ENCODE measurements at regions of chr6 and their contacts with region 1.

Region 1: GRCh38 chr6:24520929-24521546 is 26.3 kb downstream of the ALDH5A1 start:
- DNase-seq: peak; percentile 25 to 70
- H3K4me3 ChIP-seq: no peak overlapping the region
- H3K27ac ChIP-seq: no peak overlapping the region
- H3K4me1 ChIP-seq: no peaks in the 10 kb centered on the region
- H3K27me3 ChIP-seq: no peaks in the 10 kb centered on the region
- CTCF ChIP-seq: peak; percentile 88 to 93 (median 89)
- EP300 ChIP-seq: no peak
- POLR2A ChIP-seq: no peak
- RAD21 ChIP-seq: peak; percentile 55 to 74

Region 2: DNA sequence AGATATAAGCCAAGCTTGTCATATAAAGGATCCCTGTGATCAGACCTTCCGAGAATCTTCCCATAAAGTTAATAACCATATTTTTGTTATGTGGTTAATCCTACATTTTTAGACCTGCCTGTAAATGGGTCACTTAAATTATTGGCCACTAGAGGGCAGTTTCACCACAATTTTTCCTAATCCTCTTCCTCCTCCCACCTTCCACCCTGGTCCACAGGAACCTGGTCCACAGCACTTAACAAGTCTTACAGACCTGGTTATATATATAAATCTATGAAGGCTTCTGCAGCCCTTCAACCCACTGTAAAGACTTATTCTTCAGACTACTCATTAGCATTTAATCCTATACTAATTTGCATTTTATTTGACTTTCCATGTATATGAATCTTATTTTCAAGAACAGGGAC is 90.0 kb before region 1 on chr6:
- CTCF ChIA-PET with region 1: interaction called, 23 read pairs
- POLR2A ChIA-PET with region 1: no interaction called
- DNase-seq: peak in 1 of 2 experiments; percentile 9
- H3K4me3 ChIP-seq: no peak overlapping the region
- H3K27ac ChIP-seq: no peak overlapping the region
- H3K4me1 ChIP-seq: no peaks in the 10 kb centered on the region
- H3K27me3 ChIP-seq: no peaks in the 10 kb centered on the region
- CTCF ChIP-seq: peak; percentile 3 to 67 (median 51)
- EP300 ChIP-seq: no peak
- POLR2A ChIP-seq: no peak
- RAD21 ChIP-seq: peak; percentile 69 to 72

Region 3: GRCh38 chr6:24537771-24538385 is 16.8 kb after region 1 on chr6:
- CTCF ChIA-PET with region 1: interaction called, 56 read pairs
- POLR2A ChIA-PET with region 1: no interaction called
- DNase-seq: no peak
- H3K4me3 ChIP-seq: no peak overlapping the region
- H3K27ac ChIP-seq: no peak overlapping the region
- H3K4me1 ChIP-seq: no peaks in the 10 kb centered on the region
- H3K27me3 ChIP-seq: no peaks in the 10 kb centered on the region
- CTCF ChIP-seq: no peak
- EP300 ChIP-seq: no peak
- POLR2A ChIP-seq: no peak
- RAD21 ChIP-seq: no peak

Region 4: GRCh38 chr6:24554485-24554884 is 33.4 kb after region 1 on chr6:
- CTCF ChIA-PET with region 1: interaction called, 15 read pairs
- POLR2A ChIA-PET with region 1: interaction called, 3 read pairs
- DNase-seq: no peak
- H3K4me3 ChIP-seq: no peak overlapping the region
- H3K27ac ChIP-seq: no peak overlapping the region
- H3K4me1 ChIP-seq: no peaks in the 10 kb centered on the region
- H3K27me3 ChIP-seq: no peaks in the 10 kb centered on the region
- CTCF ChIP-seq: no peak
- EP300 ChIP-seq: no peak
- POLR2A ChIP-seq: no peak
- RAD21 ChIP-seq: no peak

Region 5: GRCh38 chr6:24571361-24571760 is 50.3 kb after region 1 on chr6:
- CTCF ChIA-PET with region 1: interaction called, 99 read pairs
- POLR2A ChIA-PET with region 1: interaction called, 4 read pairs
- DNase-seq: no peak
- H3K4me3 ChIP-seq: no peak overlapping the region
- H3K27ac ChIP-seq: no peak overlapping the region
- H3K4me1 ChIP-seq: 0 out of 7 replicates have a peak, but pooled peaks cover 0 to 3% (median 0%) of the 10 kb centered on the region in 4 experiments
- H3K27me3 ChIP-seq: peaks cover 0 to 6% (median 3%) of the 10 kb centered on the region in 4 experiments; a peak in 4 of 7 replicates
- CTCF ChIP-seq: no peak
- EP300 ChIP-seq: no peak
- POLR2A ChIP-seq: no peak
- RAD21 ChIP-seq: no peak

Region 6: DNA sequence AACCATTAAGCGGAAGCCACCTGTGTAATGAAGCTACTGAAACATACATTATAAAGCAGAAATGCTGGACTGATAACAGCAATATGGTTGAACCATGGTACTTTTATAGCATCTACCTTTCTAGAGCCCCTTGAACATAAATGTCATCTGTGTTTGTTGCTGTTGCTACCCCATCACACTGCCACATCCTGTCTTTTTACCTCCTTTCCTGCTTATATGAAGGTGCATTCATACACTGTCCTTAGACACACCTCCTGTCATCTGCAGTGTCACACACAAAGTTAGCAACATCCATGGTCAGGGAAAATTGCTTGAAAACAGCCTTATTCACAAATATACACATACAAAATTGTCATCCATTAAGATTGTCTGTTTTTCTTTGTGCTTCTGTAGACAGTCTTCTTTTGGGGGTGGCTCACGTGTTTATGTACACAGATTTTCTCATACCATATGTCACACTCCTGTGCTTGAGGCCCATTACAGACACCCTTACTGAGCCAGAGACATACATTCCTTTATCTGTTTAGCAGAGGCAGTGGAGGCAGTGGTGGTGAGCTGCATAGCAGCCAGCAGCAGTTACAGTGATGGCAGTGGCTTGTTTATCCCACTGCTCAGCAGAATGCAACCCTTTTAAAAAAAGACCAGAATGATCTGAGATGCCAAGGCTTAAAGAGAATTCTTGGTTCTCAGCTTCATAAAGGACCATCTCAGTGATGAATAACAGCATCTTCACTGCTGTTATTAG is 172.0 kb after region 1 on chr6:
- CTCF ChIA-PET with region 1: interaction called, 11 read pairs
- POLR2A ChIA-PET with region 1: interaction called, 4 read pairs
- DNase-seq: no peak
- H3K4me3 ChIP-seq: no peak overlapping the region
- H3K27ac ChIP-seq: no peak overlapping the region
- H3K4me1 ChIP-seq: no peaks in the 10 kb centered on the region
- H3K27me3 ChIP-seq: no peaks in the 10 kb centered on the region
- CTCF ChIP-seq: no peak
- EP300 ChIP-seq: no peak
- POLR2A ChIP-seq: no peak
- RAD21 ChIP-seq: no peak

Region 7: DNA sequence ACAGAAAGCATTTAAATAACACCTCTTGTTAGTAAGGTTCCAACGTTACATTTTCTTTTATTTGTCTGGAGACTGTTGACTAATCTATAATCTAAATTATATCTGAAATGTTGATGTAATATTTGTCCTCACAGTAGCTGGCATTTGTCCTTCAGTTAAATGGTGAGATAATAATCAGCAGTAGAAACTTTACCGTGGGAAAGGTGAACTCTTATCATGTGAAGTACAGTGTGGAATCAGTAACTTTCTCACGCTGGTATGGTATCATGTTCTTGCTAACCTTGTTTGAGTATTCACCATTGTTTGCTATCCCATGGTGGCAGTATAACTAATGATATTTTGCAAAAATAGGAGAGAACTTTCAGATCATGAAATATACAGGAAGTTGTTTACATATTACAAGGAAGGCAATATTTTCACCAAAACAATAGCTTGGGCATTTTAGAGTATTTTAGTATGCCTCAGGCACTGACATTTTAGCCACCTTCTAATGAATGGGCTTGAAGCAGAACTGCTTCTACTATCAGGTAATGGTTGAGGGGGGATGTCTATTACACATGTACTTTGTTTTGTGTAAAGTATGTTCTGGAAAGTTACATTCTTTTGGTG is 258.5 kb after region 1 on chr6:
- CTCF ChIA-PET with region 1: no interaction called
- POLR2A ChIA-PET with region 1: no interaction called
- DNase-seq: no peak
- H3K4me3 ChIP-seq: no peak overlapping the region
- H3K27ac ChIP-seq: no peak overlapping the region
- H3K4me1 ChIP-seq: peaks cover 0 to 7% (median 2%) of the 10 kb centered on the region in 4 experiments; a peak in 5 of 7 replicates
- H3K27me3 ChIP-seq: no peaks in the 10 kb centered on the region
- CTCF ChIP-seq: no peak
- EP300 ChIP-seq: no peak
- POLR2A ChIP-seq: no peak
- RAD21 ChIP-seq: no peak

Measured in H1 (cell line).